Activated T-helper 2 cell treated with anti-CD3 and anti-CD28 coated beads, Interferon-gamma antibody, Interleukin-2, Interleukin-4, amounts not matched to agents 10 μg/mL and 5 μg/mL and 100 μg/mL, durations not matched to agents 14 hours and 24 hours and 36 hours (primary cell): ENCODE measurements at regions of chr15 and their contacts with region 1.

Region 1: DNA sequence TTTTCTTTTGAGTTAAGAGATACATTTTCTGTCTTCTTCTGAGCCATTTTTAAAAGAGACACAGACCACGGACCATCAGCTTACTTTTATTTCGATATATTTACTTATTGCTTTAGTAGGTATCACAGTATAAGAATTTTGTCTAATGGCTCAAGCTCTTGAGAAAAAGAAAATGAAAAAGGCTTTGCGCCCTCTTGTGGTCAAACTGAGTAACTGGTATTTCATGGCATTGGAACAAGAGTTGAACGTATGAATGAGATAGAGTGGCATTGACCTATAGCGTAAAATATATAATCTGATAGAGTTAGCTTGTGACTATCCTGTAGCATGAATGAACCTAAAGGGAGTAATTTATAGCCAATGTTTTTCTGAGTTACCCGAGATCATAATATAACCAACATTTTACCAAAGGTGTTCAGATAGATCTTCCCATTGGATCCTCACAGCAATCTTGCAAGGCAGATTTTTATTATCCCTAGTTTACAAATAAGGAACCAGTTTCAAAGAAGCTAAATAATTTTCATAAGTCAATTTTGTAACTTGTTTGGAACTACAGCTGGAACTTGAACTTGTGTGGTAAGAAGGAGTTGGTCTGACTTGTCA is 154.6 kb downstream of the POLR2M start:
- DNase-seq: no peak
- H3K4me3 Mint-ChIP-seq: no peak overlapping the region
- H3K27ac Mint-ChIP-seq: no peak overlapping the region
- H3K4me1 Mint-ChIP-seq: peaks cover 6% of the 10 kb centered on the region
- H3K27me3 Mint-ChIP-seq: peaks cover 46% of the 10 kb centered on the region

Region 2: GRCh38 chr15:57732526-57733331 is 128.4 kb before region 1 on chr15:
- intact Hi-C with region 1: loop called (anchors 5 kb)
- DNase-seq: peak; percentile 20
- H3K4me3 Mint-ChIP-seq: no peak overlapping the region
- H3K27ac Mint-ChIP-seq: no peak overlapping the region
- H3K4me1 Mint-ChIP-seq: peaks cover 3% of the 10 kb centered on the region
- H3K27me3 Mint-ChIP-seq: peaks cover 6% of the 10 kb centered on the region

Region 3: GRCh38 chr15:57751177-57751800 is 109.8 kb before region 1 on chr15:
- intact Hi-C with region 1: loop called (anchors 2 kb)
- DNase-seq: no peak
- H3K4me3 Mint-ChIP-seq: no peak overlapping the region
- H3K27ac Mint-ChIP-seq: no peak overlapping the region
- H3K4me1 Mint-ChIP-seq: no peaks in the 10 kb centered on the region
- H3K27me3 Mint-ChIP-seq: peaks cover 2% of the 10 kb centered on the region

Region 4: GRCh38 chr15:57994221-57995049 is 133.3 kb after region 1 on chr15:
- intact Hi-C with region 1: no loop called
- DNase-seq: no peak
- H3K4me3 Mint-ChIP-seq: no peak overlapping the region
- H3K27ac Mint-ChIP-seq: no peak overlapping the region
- H3K4me1 Mint-ChIP-seq: no peaks in the 10 kb centered on the region
- H3K27me3 Mint-ChIP-seq: peaks cover 28% of the 10 kb centered on the region